ENCODE measurements at regions of chr15 and their contacts with region 1.

Region 1: GRCh38 chr15:64731012-64731806 is 44.2 kb downstream of the RBPMS2 start:
- DNase-seq: peak; percentile 12
- H3K4me3 ChIP-seq: no peak overlapping the region
- H3K27ac ChIP-seq: no peak overlapping the region
- H3K4me1 ChIP-seq: peaks cover 0 to 14% (median 3%) of the 10 kb centered on the region in 3 donors
- H3K27me3 ChIP-seq: no peaks in the 10 kb centered on the region
- CTCF ChIP-seq: peak; percentile 87 to 96 (median 94)
- POLR2A ChIP-seq: no peak

Region 2: GRCh38 chr15:64686216-64686631 is 45.0 kb before region 1 on chr15:
- intact Hi-C with region 1: loop called (anchors 2 kb)
- DNase-seq: no peak
- H3K4me3 ChIP-seq: no peak overlapping the region
- H3K27ac ChIP-seq: no peak overlapping the region
- H3K4me1 ChIP-seq: peaks cover 0 to 30% (median 3%) of the 10 kb centered on the region in 3 donors
- H3K27me3 ChIP-seq: no peaks in the 10 kb centered on the region
- CTCF ChIP-seq: peak; percentile 57 to 80 (median 72)
- POLR2A ChIP-seq: no peak

Region 3: GRCh38 chr15:64836023-64836536 is 104.9 kb after region 1 on chr15:
- intact Hi-C with region 1: no loop called
- DNase-seq: no peak
- H3K4me3 ChIP-seq: peak overlapping the region in 3 of 4 donors; percentile 1 to 50 (median 7)
- H3K27ac ChIP-seq: peak overlapping the region; percentile 44 to 83 (median 60)
- H3K4me1 ChIP-seq: peaks cover 5 to 25% (median 21%) of the 10 kb centered on the region in 3 donors
- H3K27me3 ChIP-seq: no peaks in the 10 kb centered on the region
- CTCF ChIP-seq: peak in 1 of 6 experiments; percentile 2
- POLR2A ChIP-seq: peak in 1 of 4 donors; percentile 0

Measured in esophagus squamous epithelium (tissue), 5 donors.